Activated CD8-positive, alpha-beta T cell treated with anti-CD3 and anti-CD28 coated beads, Interleukin-2, amount 10 ng/mL, durations not matched to agents 7 days and 5 days (primary cell): ENCODE measurements at regions of chr2 and their contacts with region 1.

Region 1: DNA sequence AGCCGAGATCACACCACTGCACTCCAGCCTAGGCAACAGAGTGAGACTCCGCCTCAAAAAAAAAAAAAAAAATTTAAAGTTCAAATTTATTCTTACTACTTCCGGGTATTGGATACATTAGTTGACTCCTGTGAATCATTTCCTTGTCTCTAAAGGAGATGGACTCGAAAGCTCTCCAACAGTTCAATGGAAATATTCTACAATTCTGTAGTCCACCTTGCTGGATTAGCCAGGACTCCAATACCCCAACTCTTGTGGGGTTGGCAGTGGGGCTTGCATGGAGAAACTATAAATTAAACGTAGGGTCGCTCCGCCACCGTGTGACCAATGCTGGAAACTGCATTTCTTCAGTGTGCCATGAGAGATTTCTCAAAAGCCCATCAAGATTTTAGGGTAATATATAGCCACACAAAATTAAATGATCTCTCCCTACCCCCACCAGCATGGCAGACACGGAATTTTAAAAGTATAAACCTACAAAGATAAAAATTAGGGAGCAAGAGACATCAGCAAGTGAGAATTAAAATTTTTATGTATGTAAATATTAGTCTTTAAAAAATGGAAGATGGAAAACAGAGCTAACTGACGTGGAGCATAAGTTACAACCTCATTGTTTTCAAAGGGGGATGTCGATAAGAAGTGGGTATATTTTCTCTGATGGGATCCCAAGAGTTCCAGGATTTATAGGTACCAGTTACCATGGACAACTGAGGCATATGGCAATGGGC is 27.8 kb upstream of the GAREM2 start:
- DNase-seq: peak; percentile 78
- ATAC-seq: peak; percentile 68
- H3K4me3 Mint-ChIP-seq: no peak overlapping the region
- H3K27ac Mint-ChIP-seq: no peak overlapping the region
- H3K4me1 Mint-ChIP-seq: peaks cover 2% of the 10 kb centered on the region
- H3K27me3 Mint-ChIP-seq: peaks cover 10% of the 10 kb centered on the region

Region 2: DNA sequence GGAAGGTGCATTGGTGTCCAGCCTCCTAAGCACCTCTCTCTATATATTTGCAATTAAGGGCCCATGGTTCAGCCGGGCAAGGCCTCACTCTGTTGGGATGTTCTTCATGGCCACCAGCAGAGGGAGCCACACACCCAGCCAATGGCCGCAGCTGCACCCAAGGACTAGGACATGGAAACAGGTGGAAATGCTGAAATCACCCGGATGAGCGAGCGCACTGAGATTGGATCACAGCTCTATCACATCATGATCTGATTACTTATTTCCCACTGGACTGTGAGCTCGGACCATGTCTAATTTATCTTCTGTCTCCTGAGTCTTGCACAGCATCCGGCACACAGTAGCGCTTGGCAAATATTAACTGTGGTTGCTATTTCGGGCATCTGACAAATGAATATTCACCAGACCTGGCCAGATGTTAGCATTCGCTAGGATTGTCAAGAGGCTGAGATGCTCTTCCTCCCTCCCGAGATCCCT is 194.0 kb before region 1 on chr2:
- CTCF ChIA-PET with region 1: interaction called, 13 read pairs
- POLR2A ChIA-PET with region 1: no interaction called
- DNase-seq: peak; percentile 78
- ATAC-seq: peak; percentile 95
- H3K4me3 Mint-ChIP-seq: no peak overlapping the region
- H3K27ac Mint-ChIP-seq: no peak overlapping the region
- H3K4me1 Mint-ChIP-seq: peaks cover 6% of the 10 kb centered on the region
- H3K27me3 Mint-ChIP-seq: no peaks in the 10 kb centered on the region